ENCODE measurements at regions of chr1 and their contacts with region 1.

Region 1: GRCh38 chr1:112935461-112936289 is 20.3 kb downstream of the SLC16A1 start:
- DNase-seq: peak; percentile 70
- H3K4me3 Mint-ChIP-seq: peak overlapping the region; percentile 26
- H3K27ac Mint-ChIP-seq: peak overlapping the region; percentile 68
- H3K4me1 Mint-ChIP-seq: peaks cover 28% of the 10 kb centered on the region
- H3K27me3 Mint-ChIP-seq: no peaks in the 10 kb centered on the region
- CTCF ChIP-seq: no peak

Region 2: GRCh38 chr1:112882271-112882744 is 53.4 kb before region 1 on chr1:
- CTCF ChIA-PET with region 1: interaction called, 18 read pairs
- POLR2A ChIA-PET with region 1: interaction called, 3 read pairs
- intact Hi-C with region 1: no loop called
- DNase-seq: no peak
- H3K4me3 Mint-ChIP-seq: no peak overlapping the region
- H3K27ac Mint-ChIP-seq: peak overlapping the region; percentile 43
- H3K4me1 Mint-ChIP-seq: peaks cover 20% of the 10 kb centered on the region
- H3K27me3 Mint-ChIP-seq: no peaks in the 10 kb centered on the region
- CTCF ChIP-seq: no peak

Region 3: DNA sequence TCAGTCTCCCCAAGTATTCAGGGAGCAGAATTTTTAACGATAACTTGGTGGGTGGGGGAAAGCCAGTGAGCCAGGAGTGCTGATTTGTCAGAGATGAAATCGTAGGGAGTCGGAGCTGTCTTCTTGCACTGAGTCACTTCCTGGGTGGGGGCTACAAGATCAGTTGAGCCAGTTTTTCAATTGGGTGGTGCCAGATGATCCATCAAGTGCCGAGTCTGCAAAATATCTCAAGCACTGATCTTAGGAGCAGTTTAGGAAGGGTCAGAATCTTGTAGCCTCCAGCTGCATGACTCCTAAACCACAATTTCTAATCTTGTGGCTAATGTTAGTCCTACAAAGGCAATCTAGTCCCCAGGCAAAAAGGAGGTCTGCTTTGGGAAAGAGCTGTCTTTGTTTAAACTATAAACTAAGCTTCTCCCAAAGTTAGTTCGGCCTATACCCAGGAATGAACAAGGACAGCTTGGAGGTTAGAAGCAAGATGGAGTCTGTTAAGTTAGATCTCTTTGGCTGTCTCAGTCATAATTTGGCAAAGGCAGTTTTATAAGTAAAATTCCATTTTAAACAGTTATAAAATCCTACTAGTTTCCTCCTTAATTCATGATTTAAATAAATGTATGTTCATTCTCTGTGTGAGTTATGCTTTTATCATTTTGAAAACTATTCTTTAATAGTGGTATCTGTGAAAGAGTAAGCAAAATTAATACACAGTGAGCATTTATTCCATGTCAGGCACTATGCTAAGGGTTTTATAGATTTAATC is 31.4 kb before region 1 on chr1:
- CTCF ChIA-PET with region 1: no interaction called
- POLR2A ChIA-PET with region 1: interaction called, 103 read pairs
- intact Hi-C with region 1: no loop called
- DNase-seq: peak; percentile 89
- H3K4me3 Mint-ChIP-seq: peak overlapping the region; percentile 24
- H3K27ac Mint-ChIP-seq: peak overlapping the region; percentile 92
- H3K4me1 Mint-ChIP-seq: peaks cover 35% of the 10 kb centered on the region
- H3K27me3 Mint-ChIP-seq: no peaks in the 10 kb centered on the region
- CTCF ChIP-seq: no peak

Region 4: DNA sequence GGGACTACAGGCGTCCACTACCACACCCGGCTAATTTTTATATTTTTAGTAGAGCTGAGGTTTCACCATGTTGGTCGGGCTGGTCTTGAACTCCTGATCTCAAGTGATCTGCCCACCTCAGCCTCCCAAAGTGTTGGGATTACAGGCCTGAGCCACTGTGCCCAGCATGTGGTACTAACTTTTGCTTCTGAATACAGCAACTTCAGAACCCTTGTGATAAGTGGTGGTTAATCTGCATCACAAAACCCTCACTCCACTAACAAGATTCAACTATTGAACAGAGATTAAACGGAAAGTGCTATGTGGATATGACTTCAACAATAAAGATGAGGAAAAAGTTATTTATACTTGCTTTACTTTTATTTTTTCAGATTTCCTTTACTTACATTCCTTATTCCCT is 24.2 kb before region 1 on chr1:
- CTCF ChIA-PET with region 1: interaction called, 4 read pairs
- POLR2A ChIA-PET with region 1: interaction called, 103 read pairs
- intact Hi-C with region 1: no loop called
- DNase-seq: no peak
- H3K4me3 Mint-ChIP-seq: no peak overlapping the region
- H3K27ac Mint-ChIP-seq: no peak overlapping the region
- H3K4me1 Mint-ChIP-seq: peaks cover 14% of the 10 kb centered on the region
- H3K27me3 Mint-ChIP-seq: no peaks in the 10 kb centered on the region
- CTCF ChIP-seq: no peak

Region 5: DNA sequence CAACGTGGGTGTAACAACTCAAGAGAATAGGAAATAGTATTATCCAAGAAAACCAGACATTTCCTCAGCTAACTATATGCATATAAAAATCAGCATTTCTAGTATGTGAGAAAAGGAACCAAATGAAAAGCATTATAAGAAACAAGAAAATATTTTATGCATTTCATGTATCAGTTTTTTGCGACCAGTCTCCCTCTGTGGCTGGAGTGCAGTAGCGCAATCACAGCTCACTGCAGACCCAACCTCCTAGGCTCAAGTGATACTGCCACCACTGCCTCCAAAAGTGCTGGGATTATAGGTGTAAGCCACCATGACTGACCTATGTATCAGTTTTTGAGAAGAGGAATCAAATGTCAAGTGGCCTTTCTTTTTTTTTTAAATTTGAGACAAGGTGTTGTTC is 10.7 kb before region 1 on chr1:
- CTCF ChIA-PET with region 1: no interaction called
- POLR2A ChIA-PET with region 1: interaction called, 45 read pairs
- intact Hi-C with region 1: no loop called
- DNase-seq: no peak
- H3K4me3 Mint-ChIP-seq: no peak overlapping the region
- H3K27ac Mint-ChIP-seq: peak overlapping the region; percentile 36
- H3K4me1 Mint-ChIP-seq: peaks cover 9% of the 10 kb centered on the region
- H3K27me3 Mint-ChIP-seq: no peaks in the 10 kb centered on the region
- CTCF ChIP-seq: no peak

Region 6: GRCh38 chr1:112946683-112947082 is 11.0 kb after region 1 on chr1:
- CTCF ChIA-PET with region 1: interaction called, 29 read pairs
- POLR2A ChIA-PET with region 1: interaction called, 287 read pairs
- intact Hi-C with region 1: no loop called
- DNase-seq: no peak
- H3K4me3 Mint-ChIP-seq: no peak overlapping the region
- H3K27ac Mint-ChIP-seq: no peak overlapping the region
- H3K4me1 Mint-ChIP-seq: peaks cover 13% of the 10 kb centered on the region
- H3K27me3 Mint-ChIP-seq: no peaks in the 10 kb centered on the region
- CTCF ChIP-seq: no peak

Region 7: DNA sequence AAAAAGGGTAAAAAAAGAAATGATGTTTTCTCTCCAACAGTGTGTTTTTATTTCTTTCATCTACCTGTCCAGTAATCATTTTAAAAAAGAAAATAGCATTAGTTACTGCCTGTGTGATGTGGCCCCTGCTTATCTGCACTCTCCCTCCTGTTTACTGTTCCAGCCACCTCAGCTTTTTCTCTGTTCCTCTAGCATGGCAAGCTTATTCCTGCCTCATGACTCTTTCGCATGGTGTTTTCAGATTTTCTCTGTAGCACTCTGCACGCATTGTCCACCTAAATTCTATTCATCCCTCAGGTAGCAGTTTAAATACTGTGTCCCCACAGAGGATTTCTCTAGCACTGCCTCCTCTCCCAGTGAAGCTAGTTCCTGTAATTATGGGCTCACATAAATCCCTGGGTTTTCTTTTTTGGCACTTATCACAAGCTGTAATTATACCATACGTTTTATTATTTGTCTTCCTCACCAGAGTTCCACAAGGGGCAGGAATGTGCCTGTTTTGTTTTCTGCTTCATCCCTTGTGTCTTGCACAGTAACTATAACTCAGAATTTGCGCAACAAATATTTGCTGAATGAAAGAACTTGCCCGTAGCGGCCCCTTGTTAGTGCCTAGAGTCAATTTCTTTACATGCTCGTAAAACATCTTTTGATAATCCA is 85.9 kb after region 1 on chr1:
- CTCF ChIA-PET with region 1: no interaction called
- POLR2A ChIA-PET with region 1: interaction called, 14 read pairs
- intact Hi-C with region 1: no loop called
- DNase-seq: peak; percentile 86
- H3K4me3 Mint-ChIP-seq: peak overlapping the region; percentile 32
- H3K27ac Mint-ChIP-seq: peak overlapping the region; percentile 90
- H3K4me1 Mint-ChIP-seq: peaks cover 10% of the 10 kb centered on the region
- H3K27me3 Mint-ChIP-seq: no peaks in the 10 kb centered on the region
- CTCF ChIP-seq: no peak